CD8-positive, alpha-beta memory T cell (primary cell): ENCODE measurements at regions of chr13 and their contacts with region 1.

Region 1: GRCh38 chr13:50911937-50912795 is 2.6 kb downstream of the RNASEH2B start:
- DNase-seq: peak; percentile 81 to 94 (median 83)
- H3K4me3 ChIP-seq: peak overlapping the region; percentile 90
- H3K4me3 Mint-ChIP-seq: peak overlapping the region; percentile 85 to 97 (median 94)
- H3K27ac ChIP-seq: peak overlapping the region; percentile 90
- H3K27ac Mint-ChIP-seq: peak overlapping the region; percentile 67 to 98 (median 92)
- H3K4me1 ChIP-seq: peaks cover 35% of the 10 kb centered on the region
- H3K4me1 Mint-ChIP-seq: peaks cover 53 to 66% (median 62%) of the 10 kb centered on the region in 3 donors
- H3K27me3 ChIP-seq: no peaks in the 10 kb centered on the region
- H3K27me3 Mint-ChIP-seq: no peaks in the 10 kb centered on the region

Region 2: GRCh38 chr13:49976314-49977258 is 935.6 kb before region 1 on chr13:
- CTCF ChIA-PET with region 1: interaction called, 24 read pairs
- POLR2A ChIA-PET with region 1: no interaction called
- DNase-seq: peak; percentile 61 to 81 (median 69)
- H3K4me3 ChIP-seq: no peak overlapping the region
- H3K4me3 Mint-ChIP-seq: no peak overlapping the region
- H3K27ac ChIP-seq: no peak overlapping the region
- H3K27ac Mint-ChIP-seq: peak overlapping the region in 2 of 8 donors; percentile 18 to 21
- H3K4me1 ChIP-seq: no peaks in the 10 kb centered on the region
- H3K4me1 Mint-ChIP-seq: peaks cover 2 to 5% (median 5%) of the 10 kb centered on the region in 3 donors
- H3K27me3 ChIP-seq: no peaks in the 10 kb centered on the region
- H3K27me3 Mint-ChIP-seq: no peaks in the 10 kb centered on the region

Region 3: DNA sequence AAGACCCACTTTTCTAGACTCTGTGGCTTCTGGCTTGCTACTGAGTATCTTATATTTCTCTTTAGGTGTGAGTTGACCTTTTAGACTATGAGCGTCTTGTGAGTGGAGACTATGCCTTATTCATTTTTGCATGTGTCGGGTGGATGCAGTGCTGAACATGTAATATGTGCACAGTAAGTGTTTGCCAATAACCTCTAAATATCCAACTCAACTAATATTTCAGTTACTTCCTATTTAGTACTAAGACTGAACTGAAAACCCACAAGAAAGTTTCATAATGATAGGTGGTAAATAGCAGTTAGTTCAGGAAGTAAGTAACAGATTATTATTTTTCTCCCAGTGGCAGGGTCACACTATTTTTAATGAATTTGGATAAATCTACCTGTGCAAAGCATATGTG is 627.6 kb before region 1 on chr13:
- CTCF ChIA-PET with region 1: no interaction called
- POLR2A ChIA-PET with region 1: no interaction called
- DNase-seq: no peak
- H3K4me3 ChIP-seq: no peak overlapping the region
- H3K4me3 Mint-ChIP-seq: peak overlapping the region in 1 of 7 donors; percentile 1
- H3K27ac ChIP-seq: no peak overlapping the region
- H3K27ac Mint-ChIP-seq: no peak overlapping the region
- H3K4me1 ChIP-seq: no peaks in the 10 kb centered on the region
- H3K4me1 Mint-ChIP-seq: peaks cover 16 to 23% (median 17%) of the 10 kb centered on the region in 3 donors
- H3K27me3 ChIP-seq: no peaks in the 10 kb centered on the region
- H3K27me3 Mint-ChIP-seq: no peaks in the 10 kb centered on the region

Region 4: GRCh38 chr13:50801087-50801931 is 110.9 kb before region 1 on chr13:
- CTCF ChIA-PET with region 1: interaction called, 11 read pairs
- POLR2A ChIA-PET with region 1: interaction called, 3 read pairs
- DNase-seq: peak; percentile 29 to 69 (median 52)
- H3K4me3 ChIP-seq: no peak overlapping the region
- H3K4me3 Mint-ChIP-seq: no peak overlapping the region
- H3K27ac ChIP-seq: no peak overlapping the region
- H3K27ac Mint-ChIP-seq: peak overlapping the region in 1 of 8 donors; percentile 70
- H3K4me1 ChIP-seq: no peaks in the 10 kb centered on the region
- H3K4me1 Mint-ChIP-seq: peaks cover 5 to 8% (median 7%) of the 10 kb centered on the region in 3 donors
- H3K27me3 ChIP-seq: no peaks in the 10 kb centered on the region
- H3K27me3 Mint-ChIP-seq: peaks cover 0 to 2% of the 10 kb centered on the region in 2 donors

Region 5: GRCh38 chr13:50893211-50893852 is 18.8 kb before region 1 on chr13:
- CTCF ChIA-PET with region 1: interaction called, 44 read pairs
- POLR2A ChIA-PET with region 1: interaction called, 18 read pairs
- DNase-seq: peak in 3 of 5 donors; percentile 49 to 62 (median 62)
- H3K4me3 ChIP-seq: peak overlapping the region; percentile 15
- H3K4me3 Mint-ChIP-seq: peak overlapping the region; percentile 70 to 88 (median 81)
- H3K27ac ChIP-seq: peak overlapping the region; percentile 45
- H3K27ac Mint-ChIP-seq: peak overlapping the region; percentile 69 to 96 (median 94)
- H3K4me1 ChIP-seq: peaks cover 34% of the 10 kb centered on the region
- H3K4me1 Mint-ChIP-seq: peaks cover 36 to 43% (median 41%) of the 10 kb centered on the region in 3 donors
- H3K27me3 ChIP-seq: no peaks in the 10 kb centered on the region
- H3K27me3 Mint-ChIP-seq: no peaks in the 10 kb centered on the region

Region 6: GRCh38 chr13:50901701-50902100 is 10.5 kb before region 1 on chr13:
- CTCF ChIA-PET with region 1: interaction called, 44 read pairs
- POLR2A ChIA-PET with region 1: no interaction called
- DNase-seq: no peak
- H3K4me3 ChIP-seq: no peak overlapping the region
- H3K4me3 Mint-ChIP-seq: no peak overlapping the region
- H3K27ac ChIP-seq: no peak overlapping the region
- H3K27ac Mint-ChIP-seq: no peak overlapping the region
- H3K4me1 ChIP-seq: no peaks in the 10 kb centered on the region
- H3K4me1 Mint-ChIP-seq: no peaks in the 10 kb centered on the region
- H3K27me3 ChIP-seq: no peaks in the 10 kb centered on the region
- H3K27me3 Mint-ChIP-seq: peaks cover 0 to 10% of the 10 kb centered on the region in 2 donors

Region 7: GRCh38 chr13:50979187-50979586 is 67.0 kb after region 1 on chr13:
- CTCF ChIA-PET with region 1: no interaction called
- POLR2A ChIA-PET with region 1: no interaction called
- DNase-seq: no peak
- H3K4me3 ChIP-seq: no peak overlapping the region
- H3K4me3 Mint-ChIP-seq: no peak overlapping the region
- H3K27ac ChIP-seq: no peak overlapping the region
- H3K27ac Mint-ChIP-seq: peak overlapping the region in 1 of 8 donors; percentile 19
- H3K4me1 ChIP-seq: no peaks in the 10 kb centered on the region
- H3K4me1 Mint-ChIP-seq: no peaks in the 10 kb centered on the region
- H3K27me3 ChIP-seq: no peaks in the 10 kb centered on the region
- H3K27me3 Mint-ChIP-seq: no peaks in the 10 kb centered on the region

Region 8: GRCh38 chr13:51033416-51034185 is 121.4 kb after region 1 on chr13:
- CTCF ChIA-PET with region 1: no interaction called
- POLR2A ChIA-PET with region 1: no interaction called
- DNase-seq: no peak
- H3K4me3 ChIP-seq: no peak overlapping the region
- H3K4me3 Mint-ChIP-seq: no peak overlapping the region
- H3K27ac ChIP-seq: no peak overlapping the region
- H3K27ac Mint-ChIP-seq: no peak overlapping the region
- H3K4me1 ChIP-seq: no peaks in the 10 kb centered on the region
- H3K4me1 Mint-ChIP-seq: no peaks in the 10 kb centered on the region
- H3K27me3 ChIP-seq: no peaks in the 10 kb centered on the region
- H3K27me3 Mint-ChIP-seq: peaks cover 7 to 9% of the 10 kb centered on the region in 2 donors